ENCODE measurements at regions of chr3 and their contacts with region 1.

Region 1: GRCh38 chr3:128993461-128994173 is at the start of gene CFAP92:
- DNase-seq: peak; percentile 81
- H3K4me3 ChIP-seq: peak within 1 kb of the TSS; percentile 30 to 57 (median 53)
- H3K27ac ChIP-seq: peak within 1 kb of the TSS; percentile 27
- H3K4me1 ChIP-seq: peaks cover 14% of the 10 kb centered on the region
- H3K27me3 ChIP-seq: no peaks in the 10 kb centered on the region
- CTCF ChIP-seq: peak in 1 of 2 donors; percentile 12
- total RNA-seq, gene CFAP92: 0.83 to 1.0 TPM

Region 2: GRCh38 chr3:128859630-128860029 is 134.0 kb before region 1 on chr3:
- CTCF ChIA-PET with region 1: no interaction called
- dilution Hi-C with region 1: no loop called
- in situ Hi-C with region 1: no loop called
- intact Hi-C with region 1: no loop called
- DNase-seq: no peak
- H3K4me3 ChIP-seq: no peak overlapping the region
- H3K27ac ChIP-seq: no peak overlapping the region
- H3K4me1 ChIP-seq: no peaks in the 10 kb centered on the region
- H3K27me3 ChIP-seq: no peaks in the 10 kb centered on the region
- CTCF ChIP-seq: no peak

Region 3: GRCh38 chr3:128910006-128910405 is 83.6 kb before region 1 on chr3:
- CTCF ChIA-PET with region 1: no interaction called
- dilution Hi-C with region 1: loop called (anchors 5 kb)
- in situ Hi-C with region 1: no loop called
- intact Hi-C with region 1: no loop called
- DNase-seq: no peak
- H3K4me3 ChIP-seq: no peak overlapping the region
- H3K27ac ChIP-seq: no peak overlapping the region
- H3K4me1 ChIP-seq: no peaks in the 10 kb centered on the region
- H3K27me3 ChIP-seq: no peaks in the 10 kb centered on the region
- CTCF ChIP-seq: no peak

Region 4: DNA sequence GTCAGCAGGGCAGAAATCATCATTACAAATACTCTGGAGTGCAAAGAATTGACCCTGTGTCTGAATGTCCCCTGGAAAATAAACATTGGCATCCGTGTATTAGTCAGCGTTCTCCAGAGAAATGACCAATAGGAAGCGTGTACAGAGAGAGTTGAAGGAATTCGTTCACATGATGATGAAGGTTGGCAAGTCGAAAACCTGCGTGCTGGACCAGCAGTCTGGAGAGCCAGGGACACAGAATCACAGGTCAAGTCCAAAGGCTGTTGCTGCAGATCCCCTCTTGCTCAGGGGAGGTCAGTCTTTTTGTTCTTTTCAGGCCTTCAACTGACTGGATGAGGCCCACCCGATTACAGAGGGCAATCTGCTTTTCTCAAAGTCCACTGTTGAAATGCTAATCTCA is 83.6 kb after region 1 on chr3:
- CTCF ChIA-PET with region 1: no interaction called
- dilution Hi-C with region 1: loop called (anchors 5 kb)
- in situ Hi-C with region 1: no loop called
- intact Hi-C with region 1: no loop called
- DNase-seq: no peak
- H3K4me3 ChIP-seq: no peak overlapping the region
- H3K27ac ChIP-seq: no peak overlapping the region
- H3K4me1 ChIP-seq: no peaks in the 10 kb centered on the region
- H3K27me3 ChIP-seq: no peaks in the 10 kb centered on the region
- CTCF ChIP-seq: no peak

Region 5: GRCh38 chr3:129503471-129504291 is 510.1 kb after region 1 on chr3:
- CTCF ChIA-PET with region 1: no interaction called
- dilution Hi-C with region 1: no loop called
- in situ Hi-C with region 1: no loop called
- intact Hi-C with region 1: no loop called
- DNase-seq: no peak
- H3K4me3 ChIP-seq: no peak overlapping the region
- H3K27ac ChIP-seq: no peak overlapping the region
- H3K4me1 ChIP-seq: no peaks in the 10 kb centered on the region
- H3K27me3 ChIP-seq: no peaks in the 10 kb centered on the region
- CTCF ChIP-seq: no peak